ENCODE measurements at regions of chr2 and their contacts with region 1.

Region 1: GRCh38 chr2:233084488-233084887 is 24.3 kb downstream of the INPP5D start:
- DNase-seq: peak in 6 of 9 experiments; percentile 54 to 81 (median 66)
- ATAC-seq: peak; percentile 44
- H3K4me3 ChIP-seq: peak overlapping the region; percentile 13 to 16
- H3K4me3 Mint-ChIP-seq: peak overlapping the region; percentile 76
- H3K27ac ChIP-seq: peak overlapping the region; percentile 56 to 92
- H3K27ac Mint-ChIP-seq: peak overlapping the region; percentile 91
- H3K4me1 ChIP-seq: peaks cover 72% of the 10 kb centered on the region
- H3K4me1 Mint-ChIP-seq: peaks cover 85% of the 10 kb centered on the region
- H3K27me3 ChIP-seq: no peaks in the 10 kb centered on the region
- H3K27me3 Mint-ChIP-seq: no peaks in the 10 kb centered on the region
- CTCF ChIP-seq: no peak

Region 2: GRCh38 chr2:232432598-232433184 is 651.8 kb before region 1 on chr2:
- CTCF ChIA-PET with region 1: no interaction called
- POLR2A ChIA-PET with region 1: no interaction called
- intact Hi-C with region 1: no loop called
- DNase-seq: no peak
- ATAC-seq: no peak
- H3K4me3 ChIP-seq: no peak overlapping the region
- H3K4me3 Mint-ChIP-seq: no peak overlapping the region
- H3K27ac ChIP-seq: no peak overlapping the region
- H3K27ac Mint-ChIP-seq: no peak overlapping the region
- H3K4me1 ChIP-seq: no peaks in the 10 kb centered on the region
- H3K4me1 Mint-ChIP-seq: no peaks in the 10 kb centered on the region
- H3K27me3 ChIP-seq: no peaks in the 10 kb centered on the region
- H3K27me3 Mint-ChIP-seq: peaks cover 2% of the 10 kb centered on the region
- CTCF ChIP-seq: no peak

Region 3: GRCh38 chr2:233100192-233100998 is 15.9 kb after region 1 on chr2:
- CTCF ChIA-PET with region 1: interaction called, 4 read pairs
- POLR2A ChIA-PET with region 1: interaction called, 6 read pairs
- intact Hi-C with region 1: loop called (anchors 1 to 2 kb)
- DNase-seq: peak; percentile 39 to 95 (median 77)
- ATAC-seq: peak; percentile 81
- H3K4me3 ChIP-seq: peak overlapping the region; percentile 20 to 32
- H3K4me3 Mint-ChIP-seq: peak overlapping the region; percentile 66
- H3K27ac ChIP-seq: peak overlapping the region; percentile 30 to 81
- H3K27ac Mint-ChIP-seq: peak overlapping the region; percentile 92
- H3K4me1 ChIP-seq: peaks cover 47% of the 10 kb centered on the region
- H3K4me1 Mint-ChIP-seq: peaks cover 67% of the 10 kb centered on the region
- H3K27me3 ChIP-seq: no peaks in the 10 kb centered on the region
- H3K27me3 Mint-ChIP-seq: no peaks in the 10 kb centered on the region
- CTCF ChIP-seq: no peak

Measured in CD8-positive, alpha-beta T cell (primary cell).